Transverse colon (tissue), 4 donors: ENCODE measurements at regions of chr17 and their contacts with region 1.

Region 1: GRCh38 chr17:21457051-21458026 is 81.2 kb downstream of the KCNJ12 start:
- DNase-seq: peak; percentile 94
- H3K4me3 ChIP-seq: no peak overlapping the region
- H3K27ac ChIP-seq: no peak overlapping the region
- H3K4me1 ChIP-seq: peaks cover 0 to 7% (median 2%) of the 10 kb centered on the region in 4 donors
- H3K27me3 ChIP-seq: peaks cover 5% of the 10 kb centered on the region
- CTCF ChIP-seq: peak; percentile 84 to 98 (median 93)
- EP300 ChIP-seq: no peak
- POLR2A ChIP-seq: no peak

Region 2: GRCh38 chr17:21119247-21119918 is 338.0 kb before region 1 on chr17:
- in situ Hi-C with region 1: loop called in 1 of 4 experiments (anchors 25 kb)
- intact Hi-C with region 1: no loop called
- DNase-seq: peak; percentile 74
- H3K4me3 ChIP-seq: peak overlapping the region in 1 of 4 donors; percentile 16
- H3K27ac ChIP-seq: peak overlapping the region in 2 of 4 donors; percentile 30 to 58
- H3K4me1 ChIP-seq: peaks cover 0 to 10% (median 3%) of the 10 kb centered on the region in 4 donors
- H3K27me3 ChIP-seq: no peaks in the 10 kb centered on the region
- CTCF ChIP-seq: peak; percentile 74 to 83 (median 79)
- EP300 ChIP-seq: no peak
- POLR2A ChIP-seq: no peak